OCI-LY7 (cell line): ENCODE measurements at regions of chr3 and their contacts with region 1.

Region 1: GRCh38 chr3:58305882-58306711 is at the starts of genes HTD2 and RPP14:
- DNase-seq: peak; percentile 99
- H3K4me3 ChIP-seq: peak within 1 kb of the TSS; percentile 82
- H3K27ac ChIP-seq: peak within 1 kb of the TSS; percentile 81
- H3K4me1 ChIP-seq: peaks cover 16% of the 10 kb centered on the region
- CTCF ChIP-seq: peak; percentile 87
- total RNA-seq, gene HTD2: 6.4 and 10.0 TPM in 2 replicates
- total RNA-seq, gene RPP14: 10.2 and 12.8 TPM in 2 replicates

Region 2: DNA sequence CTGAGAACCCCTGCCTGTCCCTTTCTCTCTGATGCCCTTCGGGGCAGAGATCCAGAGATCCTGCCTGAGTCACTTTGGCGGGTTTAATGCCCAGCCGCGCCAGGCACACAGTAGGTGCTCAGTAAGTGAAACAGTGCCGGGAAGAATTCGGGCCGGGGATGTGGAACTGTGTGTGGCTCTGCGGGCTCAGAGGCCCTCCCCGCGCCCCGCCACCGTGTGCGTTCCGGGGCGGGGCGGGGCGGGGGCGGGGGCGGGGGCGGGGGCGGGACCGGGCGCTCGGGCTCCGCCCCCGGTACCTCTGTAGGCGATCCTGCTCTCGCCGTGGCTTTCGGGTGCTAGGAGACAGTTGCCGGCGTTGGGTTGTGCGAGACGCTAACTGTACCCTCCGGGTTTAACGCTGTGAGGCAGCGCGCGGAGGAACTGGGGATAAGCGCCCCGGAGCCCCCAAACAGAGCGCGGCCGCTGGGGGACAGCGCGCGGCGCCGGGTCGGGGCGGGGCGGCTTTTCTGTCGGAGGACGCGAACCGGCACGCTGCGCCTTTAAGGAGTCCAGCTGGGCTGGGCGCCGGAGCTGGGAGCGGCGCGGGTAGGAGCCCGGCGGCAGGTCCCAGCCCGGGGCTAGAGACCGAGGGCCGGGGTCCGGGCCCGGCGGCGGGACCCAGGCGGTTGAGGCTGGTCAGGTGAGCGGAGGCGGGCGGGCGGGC is 68.7 kb before region 1 on chr3 and contains the start of gene ABHD6:
- CTCF ChIA-PET with region 1: interaction called, 3 read pairs
- POLR2A ChIA-PET with region 1: interaction called, 4 read pairs
- intact Hi-C with region 1: loop called (anchors 2 kb)
- DNase-seq: peak; percentile 86
- H3K4me3 ChIP-seq: peak within 1 kb of the TSS; percentile 80
- H3K27ac ChIP-seq: peak within 1 kb of the TSS; percentile 50
- H3K4me1 ChIP-seq: peaks cover 25% of the 10 kb centered on the region
- CTCF ChIP-seq: peak; percentile 59
- total RNA-seq, gene ABHD6: 5.8 TPM in 2 replicates

Region 3: GRCh38 chr3:58349792-58350626 is 43.9 kb after region 1 on chr3:
- CTCF ChIA-PET with region 1: interaction called, 7 read pairs
- POLR2A ChIA-PET with region 1: interaction called, 12 read pairs
- intact Hi-C with region 1: no loop called
- DNase-seq: peak; percentile 98
- H3K4me3 ChIP-seq: peak overlapping the region; percentile 62
- H3K27ac ChIP-seq: peak overlapping the region; percentile 99
- H3K4me1 ChIP-seq: peaks cover 98% of the 10 kb centered on the region
- CTCF ChIP-seq: no peak

Region 4: DNA sequence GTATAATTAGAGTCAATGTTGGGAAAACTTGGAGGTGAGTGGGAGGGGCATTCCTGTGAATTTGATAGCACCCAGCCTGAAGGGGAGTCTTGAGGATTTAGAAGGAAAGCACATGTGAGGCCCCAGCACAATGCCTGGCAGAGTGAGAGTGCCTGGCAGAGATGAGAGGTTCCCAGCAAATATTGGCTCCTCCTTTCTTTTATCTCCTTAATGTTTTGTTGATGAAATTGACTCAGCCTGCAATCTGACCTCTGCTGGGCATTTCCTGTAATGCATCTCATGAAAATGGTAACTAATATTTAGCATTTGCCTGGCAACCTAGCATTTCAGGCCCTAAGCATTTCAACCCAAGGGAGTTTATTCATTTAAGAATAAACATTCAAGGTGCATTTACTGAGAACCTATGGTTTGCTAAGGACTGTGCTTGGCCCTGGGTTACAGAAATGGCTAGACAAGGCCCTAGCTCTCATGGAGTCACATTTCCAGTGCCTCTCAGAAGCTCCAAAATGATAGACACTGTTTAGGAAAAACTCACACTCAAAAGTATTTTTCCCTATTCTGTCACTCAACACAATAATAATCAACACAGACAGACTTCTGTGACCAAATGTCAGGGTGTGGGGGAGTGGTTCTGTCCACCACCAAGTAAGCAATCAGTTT is 108.6 kb after region 1 on chr3:
- CTCF ChIA-PET with region 1: interaction called, 3 read pairs
- POLR2A ChIA-PET with region 1: no interaction called
- intact Hi-C with region 1: loop called (anchors 5 kb)
- DNase-seq: peak; percentile 76
- H3K4me3 ChIP-seq: no peak overlapping the region
- H3K27ac ChIP-seq: no peak overlapping the region
- H3K4me1 ChIP-seq: peaks cover 11% of the 10 kb centered on the region
- CTCF ChIP-seq: peak; percentile 88

Region 5: DNA sequence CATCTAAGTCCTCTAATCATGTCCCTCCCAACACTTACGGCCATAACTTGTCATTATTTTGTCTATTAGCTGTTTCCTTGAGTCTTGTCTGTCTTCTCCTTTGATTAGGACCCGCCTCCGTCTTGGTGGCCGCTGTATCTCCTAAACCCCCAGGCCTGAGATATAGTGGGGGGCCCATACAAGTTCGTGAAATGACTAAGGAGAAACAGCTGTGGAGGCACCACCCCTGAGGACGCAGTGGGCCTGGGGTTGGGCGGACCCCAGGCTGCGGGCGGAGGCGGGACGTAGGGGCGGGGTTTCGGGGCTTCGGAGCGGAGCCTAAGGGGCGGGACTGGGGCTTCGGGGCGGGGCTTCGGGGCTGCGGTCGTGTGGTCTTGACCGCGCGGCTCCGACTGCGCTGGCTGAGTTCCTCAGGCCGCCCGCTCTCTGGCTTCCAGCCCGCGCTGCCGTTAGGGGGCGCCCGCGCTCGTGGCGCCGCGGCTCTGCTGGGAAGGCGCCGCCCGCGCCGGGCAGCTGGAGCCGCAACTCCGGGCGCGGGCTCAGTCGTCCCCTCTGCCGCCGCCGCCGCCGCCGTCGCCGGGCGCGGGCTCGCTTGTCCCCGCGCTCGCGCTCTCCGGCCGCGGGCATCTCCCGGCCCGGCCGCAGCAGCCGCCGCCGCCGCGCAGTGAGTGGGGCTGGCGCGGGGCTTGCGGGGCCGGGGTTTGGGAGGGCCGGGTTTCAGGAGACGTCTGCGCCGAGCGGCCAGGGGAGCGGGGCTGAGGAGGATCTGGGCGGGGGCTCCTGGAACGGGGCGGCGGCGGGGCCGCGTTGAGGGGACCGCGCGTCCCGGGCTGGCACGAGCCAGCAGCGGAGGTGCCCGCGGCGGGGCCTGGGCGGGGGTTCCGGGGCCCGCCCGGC is 185.7 kb after region 1 on chr3 and contains the start of gene KCTD6:
- CTCF ChIA-PET with region 1: no interaction called
- POLR2A ChIA-PET with region 1: interaction called, 8 read pairs
- intact Hi-C with region 1: loop called (anchors 1 kb)
- DNase-seq: peak; percentile 96
- H3K4me3 ChIP-seq: peak within 1 kb of the TSS; percentile 77
- H3K27ac ChIP-seq: peak within 1 kb of the TSS; percentile 25
- H3K4me1 ChIP-seq: peaks cover 48% of the 10 kb centered on the region
- CTCF ChIP-seq: peak; percentile 68
- total RNA-seq, gene KCTD6: 12.6 and 17.1 TPM in 2 replicates

Region 6: DNA sequence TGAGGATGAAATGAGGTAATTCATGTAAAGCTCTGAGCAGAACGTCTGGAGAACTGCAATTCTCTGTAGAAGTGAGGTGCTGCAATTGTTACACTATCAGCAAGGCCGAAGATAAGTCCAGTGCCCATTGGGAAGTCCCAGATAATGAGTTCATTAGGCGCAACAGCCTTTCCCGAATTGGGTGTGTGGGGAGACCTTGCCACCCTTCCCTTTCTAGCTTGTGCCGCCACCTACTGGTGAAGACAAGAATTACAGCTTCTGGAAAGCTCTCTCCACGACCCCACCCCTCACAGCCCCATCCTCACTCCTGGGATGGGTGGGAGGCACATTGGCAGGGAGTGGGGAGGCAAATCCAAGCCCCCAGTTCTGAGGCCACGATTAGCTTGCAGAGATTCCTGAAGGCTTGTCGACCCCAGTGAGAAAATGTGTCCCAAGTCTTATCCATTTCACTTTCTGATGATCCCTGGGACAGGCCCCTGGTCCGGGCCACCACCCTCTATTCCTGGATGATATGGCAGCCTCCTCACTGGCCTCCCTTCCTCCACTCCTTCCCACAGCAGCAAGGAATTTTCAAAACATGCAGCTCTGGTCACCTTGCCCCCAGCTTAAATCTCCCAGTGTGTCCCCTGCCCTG is 324.1 kb after region 1 on chr3:
- CTCF ChIA-PET with region 1: no interaction called
- POLR2A ChIA-PET with region 1: no interaction called
- intact Hi-C with region 1: loop called (anchors 5 kb)
- DNase-seq: peak; percentile 60
- H3K4me3 ChIP-seq: no peak overlapping the region
- H3K27ac ChIP-seq: no peak overlapping the region
- H3K4me1 ChIP-seq: no peaks in the 10 kb centered on the region
- CTCF ChIP-seq: peak; percentile 89